Aorta (tissue), 5 donors: ENCODE measurements at regions of chr11 and their contacts with region 1.

Region 1: DNA sequence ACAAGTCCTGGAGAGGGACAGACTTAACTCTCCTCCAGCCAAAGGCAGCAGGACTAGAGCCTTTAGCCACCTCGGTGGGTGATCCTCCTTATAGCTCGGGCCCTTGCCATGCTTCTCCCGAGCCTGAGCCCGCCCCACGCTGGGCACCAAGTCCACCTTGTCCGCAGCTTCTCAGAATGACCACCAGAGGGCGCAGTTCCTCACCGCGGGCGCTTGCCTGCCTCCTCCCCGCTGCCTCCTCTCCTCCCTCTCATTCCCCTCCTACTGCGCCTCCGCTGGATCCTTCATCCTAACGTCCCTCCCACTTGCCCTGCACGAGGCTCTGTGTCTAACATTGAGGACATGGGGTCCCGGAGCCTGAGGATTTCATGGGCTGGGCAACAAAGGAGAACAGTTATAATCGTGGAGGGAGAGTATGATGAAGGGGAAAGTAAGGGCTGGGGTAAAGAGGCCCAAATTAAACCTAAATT is 11.3 kb upstream of the MOGAT2 start:
- DNase-seq: peak; percentile 77 to 91
- ATAC-seq: peak; percentile 92
- H3K4me3 ChIP-seq: no peak overlapping the region
- H3K27ac ChIP-seq: no peak overlapping the region
- H3K4me1 ChIP-seq: no peaks in the 10 kb centered on the region
- H3K27me3 ChIP-seq: no peaks in the 10 kb centered on the region

Region 2: DNA sequence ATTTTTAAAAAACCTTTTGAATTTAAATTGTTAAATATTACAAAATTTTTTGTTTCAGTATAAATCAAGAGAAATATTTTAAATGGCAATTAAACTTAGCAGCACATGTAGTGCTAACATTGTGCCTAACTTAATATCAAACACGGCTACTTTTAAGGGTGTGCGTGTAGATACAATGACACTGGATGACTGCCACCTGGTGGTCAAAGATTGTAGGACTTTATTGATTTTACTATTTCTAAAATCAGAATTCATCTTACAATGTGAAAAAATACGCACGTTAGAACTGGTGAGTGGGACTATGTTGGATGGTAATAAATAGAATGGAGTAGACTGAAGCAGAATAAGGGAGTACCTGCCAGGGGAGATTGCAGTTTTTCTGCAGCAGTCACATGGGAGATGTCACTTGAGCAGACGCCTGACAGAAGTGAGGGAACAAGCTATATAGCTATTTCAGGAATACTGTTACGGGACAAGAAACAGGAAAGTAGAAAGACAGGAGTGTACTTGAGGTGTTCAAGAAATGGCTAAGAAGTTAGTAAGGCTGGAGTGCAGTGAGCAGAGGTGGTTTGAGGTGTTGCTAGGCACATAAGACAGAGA is 161.6 kb after region 1 on chr11:
- intact Hi-C with region 1: loop called in 1 of 2 experiments (anchors 10 kb)
- DNase-seq: no peak
- ATAC-seq: peak; percentile 60
- H3K4me3 ChIP-seq: no peak overlapping the region
- H3K27ac ChIP-seq: no peak overlapping the region
- H3K4me1 ChIP-seq: no peaks in the 10 kb centered on the region
- H3K27me3 ChIP-seq: no peaks in the 10 kb centered on the region

Region 3: DNA sequence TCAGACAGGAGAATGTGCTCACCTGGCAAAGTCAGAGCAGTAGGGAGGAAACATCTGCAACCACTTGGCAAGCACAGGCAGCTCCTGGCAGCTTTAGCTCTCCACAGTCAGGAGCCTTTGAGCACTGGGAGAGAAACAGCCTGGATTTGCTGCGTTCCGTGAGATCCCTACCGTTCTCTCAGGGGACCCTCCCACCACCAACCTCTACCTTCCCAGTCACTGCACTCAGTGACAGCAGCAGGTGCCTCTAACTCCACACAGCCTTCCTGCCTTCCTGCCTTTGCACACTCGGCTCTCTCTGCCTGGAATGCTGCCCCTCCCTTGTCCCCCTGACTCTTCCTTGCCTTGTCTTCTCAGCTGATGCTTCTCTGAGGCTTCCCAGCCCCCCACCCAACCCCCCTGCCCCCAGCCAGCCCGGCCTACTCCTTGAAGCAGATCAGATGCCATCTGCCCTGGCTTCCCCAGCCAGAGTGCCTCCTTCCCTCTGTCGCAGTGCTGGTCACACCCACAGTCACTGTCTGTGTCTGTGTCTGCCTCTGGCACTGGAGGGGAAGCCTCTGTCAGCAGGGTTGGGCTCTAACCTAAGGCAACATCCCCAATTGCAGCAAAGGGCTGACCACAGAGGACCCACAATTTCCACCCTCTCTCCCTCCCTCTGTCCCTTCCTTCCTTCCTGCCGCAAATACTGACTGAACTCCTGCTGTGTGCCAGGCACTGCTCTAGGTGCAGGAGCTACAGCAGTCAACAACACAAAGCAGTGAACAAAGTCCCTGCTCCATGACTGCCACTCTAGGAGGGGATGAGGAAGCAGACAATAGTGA is 1062.0 kb after region 1 on chr11:
- intact Hi-C with region 1: no loop called
- DNase-seq: peak in 1 of 2 donors; percentile 84
- ATAC-seq: no peak
- H3K4me3 ChIP-seq: no peak overlapping the region
- H3K27ac ChIP-seq: no peak overlapping the region
- H3K4me1 ChIP-seq: peaks cover 0 to 5% of the 10 kb centered on the region in 2 donors
- H3K27me3 ChIP-seq: no peaks in the 10 kb centered on the region